IMR-90 (cell line): ENCODE measurements at regions of chr15 and their contacts with region 1.

Region 1: DNA sequence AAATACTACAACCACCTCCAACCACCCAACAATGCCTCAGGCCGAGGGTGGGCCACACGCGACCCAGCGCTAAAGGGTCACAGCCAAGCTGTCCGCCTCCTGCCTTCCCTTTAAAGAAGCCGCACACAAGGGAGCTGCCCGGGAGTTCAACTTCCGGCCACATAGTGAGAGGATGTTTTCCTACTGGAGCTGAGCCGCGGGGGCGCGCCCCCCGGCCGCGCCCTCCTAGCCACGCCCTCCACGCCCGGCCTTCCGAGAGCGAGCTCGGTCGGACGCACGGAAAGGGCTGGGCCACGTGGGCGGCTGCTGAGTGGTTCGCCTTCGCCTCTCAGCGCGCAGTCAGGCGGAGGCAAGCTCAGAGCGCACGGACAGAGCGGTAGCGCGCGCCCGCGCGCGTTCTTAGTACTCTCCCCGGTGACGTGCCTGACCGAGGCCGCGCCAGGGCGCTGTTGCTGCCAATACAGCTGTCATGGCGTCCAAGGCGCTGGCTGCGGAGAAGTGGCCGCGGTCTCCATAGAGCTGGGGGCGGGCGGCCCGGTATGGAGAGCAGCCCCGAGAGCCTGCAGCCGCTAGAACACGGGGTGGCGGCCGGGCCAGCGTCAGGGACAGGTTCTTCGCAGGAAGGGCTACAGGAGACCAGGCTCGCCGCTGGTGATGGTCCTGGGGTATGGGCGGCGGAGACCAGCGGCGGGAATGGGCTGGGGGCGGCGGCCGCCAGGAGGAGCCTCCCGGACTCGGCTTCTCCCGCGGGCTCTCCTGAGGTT is at the start of gene MINDY2:
- DNase-seq: peak; percentile 99
- ATAC-seq: peak; percentile 95
- H3K4me3 ChIP-seq: peak within 1 kb of the TSS; percentile 88
- H3K27ac ChIP-seq: peak within 1 kb of the TSS; percentile 93
- H3K4me1 ChIP-seq: no peaks in the 10 kb centered on the region
- H3K27me3 ChIP-seq: no peaks in the 10 kb centered on the region
- CTCF ChIP-seq: peak; percentile 33; the same call in 1 of the 2 replicates
- POLR2A ChIP-seq: peak; percentile 67; the same call in 1 of the 2 replicates
- RAD21 ChIP-seq: peak; percentile 28
- total RNA-seq, gene MINDY2: 9.3 and 15.0 TPM in 2 replicates

Region 2: GRCh38 chr15:57462381-57462780 is 1308.7 kb before region 1 on chr15:
- CTCF ChIA-PET with region 1: no interaction called
- POLR2A ChIA-PET with region 1: no interaction called
- dilution Hi-C with region 1: no loop called
- in situ Hi-C with region 1: no loop called
- intact Hi-C with region 1: no loop called
- DNase-seq: peak; percentile 4
- ATAC-seq: peak; percentile 44; the same call in 1 of the 2 replicates
- H3K4me3 ChIP-seq: no peak overlapping the region
- H3K27ac ChIP-seq: no peak overlapping the region
- H3K4me1 ChIP-seq: no peaks in the 10 kb centered on the region
- H3K27me3 ChIP-seq: peaks cover 23% of the 10 kb centered on the region
- CTCF ChIP-seq: peak; percentile 27; the same call in 1 of the 2 replicates
- POLR2A ChIP-seq: no peak
- RAD21 ChIP-seq: peak; percentile 21; the same call in 1 of the 2 replicates

Region 3: DNA sequence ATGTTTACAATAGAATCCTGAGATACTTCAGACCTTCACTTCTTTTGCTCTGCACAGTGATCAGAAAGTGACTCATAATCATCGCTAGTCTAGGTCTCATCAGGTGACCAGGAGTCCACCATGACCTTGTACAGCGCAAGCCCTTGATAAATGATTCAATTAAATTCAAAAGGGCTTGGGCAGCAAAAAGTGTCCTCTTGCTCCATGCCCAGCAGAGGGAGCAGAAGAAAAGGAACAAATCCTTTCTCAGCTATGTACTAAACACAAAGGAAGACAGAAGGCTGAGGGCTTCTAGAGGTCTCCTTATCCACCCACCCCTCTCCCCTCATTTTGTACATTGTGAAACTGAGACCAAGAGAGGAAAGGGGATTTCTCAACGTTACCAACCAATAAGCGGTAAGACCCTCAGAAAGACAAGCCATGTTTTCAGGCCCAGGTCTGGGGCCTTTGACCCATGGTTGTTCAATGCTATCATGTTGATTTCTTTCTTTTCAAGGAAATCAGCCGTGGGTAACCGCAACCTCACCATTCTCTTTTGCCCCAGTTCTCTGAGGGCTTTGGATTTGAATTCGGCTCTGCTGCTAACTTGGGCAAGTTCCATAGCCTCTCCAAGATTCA is 558.0 kb before region 1 on chr15:
- CTCF ChIA-PET with region 1: interaction called, 10 read pairs
- POLR2A ChIA-PET with region 1: no interaction called
- dilution Hi-C with region 1: no loop called
- in situ Hi-C with region 1: no loop called
- intact Hi-C with region 1: no loop called
- DNase-seq: peak; percentile 55
- ATAC-seq: peak; percentile 92
- H3K4me3 ChIP-seq: no peak overlapping the region
- H3K27ac ChIP-seq: no peak overlapping the region
- H3K4me1 ChIP-seq: no peaks in the 10 kb centered on the region
- H3K27me3 ChIP-seq: no peaks in the 10 kb centered on the region
- CTCF ChIP-seq: peak; percentile 62
- POLR2A ChIP-seq: no peak
- RAD21 ChIP-seq: peak; percentile 54

Region 4: DNA sequence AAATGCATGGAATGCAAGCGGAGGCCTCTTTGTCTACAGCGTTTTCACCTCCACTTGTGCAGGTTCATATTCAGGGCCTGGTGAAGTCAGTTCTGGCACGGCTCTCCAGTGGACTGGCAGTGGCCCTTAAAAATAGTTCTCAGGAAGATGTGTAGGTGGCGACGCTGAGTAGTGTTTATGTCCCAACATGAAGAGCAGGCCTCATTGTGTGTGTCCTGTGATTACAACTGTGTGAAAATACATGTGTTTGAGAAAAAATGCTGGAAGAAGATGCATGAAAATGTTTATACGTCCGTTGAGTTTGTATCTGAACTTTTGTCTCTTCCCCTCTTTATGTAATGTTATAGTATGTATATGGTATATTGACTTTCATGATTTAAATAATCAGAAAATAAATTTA is 332.1 kb before region 1 on chr15:
- CTCF ChIA-PET with region 1: no interaction called
- POLR2A ChIA-PET with region 1: no interaction called
- dilution Hi-C with region 1: no loop called
- in situ Hi-C with region 1: no loop called
- intact Hi-C with region 1: no loop called
- DNase-seq: peak; percentile 46
- ATAC-seq: no peak
- H3K4me3 ChIP-seq: no peak overlapping the region
- H3K27ac ChIP-seq: no peak overlapping the region
- H3K4me1 ChIP-seq: peaks cover 22% of the 10 kb centered on the region
- H3K27me3 ChIP-seq: no peaks in the 10 kb centered on the region
- CTCF ChIP-seq: 0 out of 2 replicates have a peak, but pooled peaks have one; percentile 25
- POLR2A ChIP-seq: no peak
- RAD21 ChIP-seq: peak; percentile 32; the same call in 1 of the 2 replicates

Region 5: DNA sequence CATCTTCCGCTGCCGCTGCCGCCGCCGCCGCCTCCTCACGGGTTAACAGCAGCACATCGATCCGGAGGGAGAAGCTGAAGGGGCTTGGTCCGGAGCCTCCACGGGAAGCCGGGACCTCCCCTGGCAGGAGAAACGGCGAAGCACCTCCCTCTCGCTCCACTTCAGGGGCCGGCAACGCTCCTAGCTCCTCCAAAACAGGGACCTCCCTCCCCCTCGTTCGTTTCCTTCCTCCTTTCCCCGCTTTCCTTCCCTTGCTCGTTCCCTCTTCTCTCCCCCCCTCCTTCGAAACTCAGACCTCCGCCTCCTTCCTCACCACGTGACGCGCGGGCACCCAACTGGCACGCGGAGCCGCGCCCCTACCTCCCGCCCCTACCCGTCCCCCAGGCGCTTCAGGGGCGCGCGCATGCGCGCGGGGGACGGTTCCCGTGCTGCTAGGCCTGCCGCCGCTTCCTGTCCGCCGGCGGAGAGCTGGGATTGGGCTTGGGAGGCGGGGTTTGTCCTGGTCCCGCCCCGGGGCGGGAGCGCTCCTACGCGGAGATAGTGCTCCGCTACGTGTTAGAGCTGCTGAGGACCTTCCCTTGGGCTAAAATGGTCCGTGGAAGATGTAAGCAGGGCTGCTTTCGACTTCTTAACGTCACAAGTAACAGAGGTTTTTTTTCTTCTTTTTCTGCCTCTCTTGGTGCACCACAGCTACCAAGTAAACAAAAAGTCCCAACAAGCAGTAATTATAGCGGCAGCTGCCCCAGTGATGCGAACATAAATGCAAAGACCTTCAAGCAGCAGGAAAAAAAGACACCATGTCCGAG is 21.3 kb before region 1 on chr15 and contains the start of gene ADAM10:
- CTCF ChIA-PET with region 1: interaction called, 11 read pairs
- POLR2A ChIA-PET with region 1: interaction called, 9 read pairs
- dilution Hi-C with region 1: no loop called
- in situ Hi-C with region 1: no loop called
- intact Hi-C with region 1: loop called (anchors 2 kb)
- DNase-seq: peak; percentile 99
- ATAC-seq: peak; percentile 94
- H3K4me3 ChIP-seq: peak within 1 kb of the TSS; percentile 74
- H3K27ac ChIP-seq: peak within 1 kb of the TSS; percentile 93
- H3K4me1 ChIP-seq: no peaks in the 10 kb centered on the region
- H3K27me3 ChIP-seq: no peaks in the 10 kb centered on the region
- CTCF ChIP-seq: no peak
- POLR2A ChIP-seq: peak; percentile 86
- RAD21 ChIP-seq: no peak; the same call in 1 of the 2 replicates
- total RNA-seq, gene ADAM10: 185 and 217 TPM in 2 replicates

Region 6: GRCh38 chr15:58933281-58934113 is 162.5 kb after region 1 on chr15 and contains the start of gene SLTM:
- CTCF ChIA-PET with region 1: no interaction called
- POLR2A ChIA-PET with region 1: no interaction called
- dilution Hi-C with region 1: no loop called
- in situ Hi-C with region 1: no loop called
- intact Hi-C with region 1: loop called (anchors 5 kb)
- DNase-seq: peak; percentile 95
- ATAC-seq: peak; percentile 96
- H3K4me3 ChIP-seq: peak within 1 kb of the TSS; percentile 77
- H3K27ac ChIP-seq: peak within 1 kb of the TSS; percentile 97
- H3K4me1 ChIP-seq: no peaks in the 10 kb centered on the region; the same call in 1 of the 2 replicates
- H3K27me3 ChIP-seq: no peaks in the 10 kb centered on the region
- CTCF ChIP-seq: no peak; the same call in none of the 2 replicates
- POLR2A ChIP-seq: peak; percentile 98
- RAD21 ChIP-seq: no peak
- total RNA-seq, gene SLTM: 36.0 and 66.7 TPM in 2 replicates